Gastrocnemius medialis (tissue), 4 donors: ENCODE measurements at regions of chr10 and their contacts with region 1.

Region 1: DNA sequence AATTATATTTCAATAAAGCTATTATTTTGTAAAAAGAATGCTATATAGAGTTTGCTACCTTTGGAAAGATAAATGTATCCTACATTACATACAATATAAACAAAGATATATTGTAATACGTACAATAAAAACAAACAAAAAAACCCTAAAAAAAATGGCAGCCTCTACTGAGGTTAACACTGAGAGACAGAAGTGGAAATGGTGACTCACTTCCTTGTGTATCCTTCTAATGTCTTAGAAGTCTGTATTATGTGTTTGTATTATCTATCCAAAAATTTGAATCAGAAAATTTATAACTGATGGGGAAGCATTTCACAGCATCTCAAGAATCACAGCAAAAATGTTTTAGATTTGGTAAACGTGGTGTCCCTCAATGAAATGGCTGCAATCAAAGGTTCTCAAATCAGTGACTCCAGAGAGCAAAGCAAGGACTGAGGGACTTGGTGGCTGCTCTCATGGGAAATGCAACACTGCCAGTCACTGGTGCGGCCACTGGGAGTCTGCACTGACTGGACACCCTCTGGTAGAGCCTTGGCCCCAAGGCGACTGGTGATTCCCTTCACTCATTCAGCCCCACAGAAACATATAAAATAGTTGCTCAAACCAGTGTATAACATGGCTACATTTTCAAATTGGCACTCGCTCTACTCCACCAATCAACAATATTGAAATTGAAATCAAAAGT is 53.8 kb downstream of the PANK1 start:
- DNase-seq: peak in 1 of 2 donors; percentile 54
- ATAC-seq: peak; percentile 37 to 79
- H3K4me3 ChIP-seq: no peak overlapping the region
- H3K27ac ChIP-seq: peak overlapping the region; percentile 67 to 79 (median 74)
- H3K4me1 ChIP-seq: peaks cover 40 to 52% of the 10 kb centered on the region in 2 donors
- H3K27me3 ChIP-seq: no peaks in the 10 kb centered on the region
- CTCF ChIP-seq: peak in 2 of 5 experiments; percentile 11 to 30
- POLR2A ChIP-seq: no peak

Region 2: GRCh38 chr10:89633484-89633883 is 42.2 kb after region 1 on chr10:
- in situ Hi-C with region 1: no loop called
- intact Hi-C with region 1: loop called (anchors 5 kb)
- DNase-seq: peak; percentile 59 to 71
- ATAC-seq: peak; percentile 99
- H3K4me3 ChIP-seq: peak overlapping the region in 1 of 4 donors; percentile 19
- H3K27ac ChIP-seq: peak overlapping the region; percentile 84 to 92 (median 89)
- H3K4me1 ChIP-seq: peaks cover 49% of the 10 kb centered on the region in 2 donors
- H3K27me3 ChIP-seq: no peaks in the 10 kb centered on the region
- CTCF ChIP-seq: no peak
- POLR2A ChIP-seq: peak in 1 of 2 donors; percentile 29